ENCODE measurements at regions of chr15 and their contacts with region 1.

Region 1: GRCh38 chr15:48285329-48286214 is 45.7 kb upstream of the DUT start:
- DNase-seq: peak; percentile 11 to 89
- H3K4me3 ChIP-seq: peak overlapping the region; percentile 35 to 49
- H3K27ac ChIP-seq: peak overlapping the region; percentile 70 to 81
- H3K4me1 ChIP-seq: peaks cover 9 to 20% of the 10 kb centered on the region in 2 donors
- H3K27me3 ChIP-seq: no peaks in the 10 kb centered on the region
- CTCF ChIP-seq: peak; percentile 63 to 75 (median 75)

Region 2: GRCh38 chr15:47473832-47474231 is 811.7 kb before region 1 on chr15:
- intact Hi-C with region 1: loop called (anchors 5 kb)
- DNase-seq: peak; percentile 16 to 87
- H3K4me3 ChIP-seq: peak overlapping the region in 1 of 2 donors; percentile 11
- H3K27ac ChIP-seq: peak overlapping the region; percentile 66 to 72
- H3K4me1 ChIP-seq: peaks cover 5 to 22% of the 10 kb centered on the region in 2 donors
- H3K27me3 ChIP-seq: no peaks in the 10 kb centered on the region
- CTCF ChIP-seq: no peak

Region 3: GRCh38 chr15:48177766-48178647 is 107.6 kb before region 1 on chr15 and contains the start of gene MYEF2:
- intact Hi-C with region 1: loop called (anchors 5 kb)
- DNase-seq: peak; percentile 15 to 84
- H3K4me3 ChIP-seq: peak within 1 kb of the TSS; percentile 63 to 80
- H3K27ac ChIP-seq: peak within 1 kb of the TSS; percentile 92 to 96
- H3K4me1 ChIP-seq: peaks cover 0 to 6% of the 10 kb centered on the region in 2 donors
- H3K27me3 ChIP-seq: no peaks in the 10 kb centered on the region
- CTCF ChIP-seq: no peak
- total RNA-seq, gene MYEF2: 13.6 TPM

Region 4: DNA sequence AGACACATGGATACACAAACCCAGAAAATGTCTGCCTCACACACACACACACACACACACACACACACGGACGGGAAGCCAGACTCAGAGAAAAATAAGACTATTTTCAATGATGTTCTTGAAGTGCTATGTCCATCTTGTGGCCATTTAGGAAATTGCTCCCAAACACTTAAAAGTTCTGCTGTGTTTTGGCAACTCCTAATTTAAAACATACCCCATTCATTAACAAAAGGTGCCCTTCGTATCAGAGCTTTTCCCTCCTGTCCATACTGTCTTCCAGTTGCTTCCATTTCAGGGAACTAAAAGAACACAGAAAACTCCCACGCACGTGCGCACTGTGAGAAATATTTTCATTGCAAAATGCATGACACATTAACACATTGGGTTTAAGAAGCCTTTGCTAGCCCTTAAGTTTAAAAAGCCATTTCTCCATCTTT is 34.9 kb before region 1 on chr15:
- intact Hi-C with region 1: loop called (anchors 5 kb)
- DNase-seq: peak in 1 of 2 donors; percentile 66
- H3K4me3 ChIP-seq: no peak overlapping the region
- H3K27ac ChIP-seq: peak overlapping the region in 1 of 2 donors; percentile 28
- H3K4me1 ChIP-seq: peaks cover 0 to 6% of the 10 kb centered on the region in 2 donors
- H3K27me3 ChIP-seq: no peaks in the 10 kb centered on the region
- CTCF ChIP-seq: peak; percentile 58 to 67 (median 63)

Region 5: GRCh38 chr15:48541341-48542278 is 256.0 kb after region 1 on chr15:
- intact Hi-C with region 1: no loop called
- DNase-seq: no peak
- H3K4me3 ChIP-seq: peak overlapping the region in 1 of 2 donors; percentile 39
- H3K27ac ChIP-seq: peak overlapping the region; percentile 24 to 55
- H3K4me1 ChIP-seq: peaks cover 7 to 8% of the 10 kb centered on the region in 2 donors
- H3K27me3 ChIP-seq: no peaks in the 10 kb centered on the region
- CTCF ChIP-seq: no peak

Measured in ascending aorta (tissue), 2 donors.